PC-3 (cell line): ENCODE measurements at regions of chr16 and their contacts with region 1.

Region 1: DNA sequence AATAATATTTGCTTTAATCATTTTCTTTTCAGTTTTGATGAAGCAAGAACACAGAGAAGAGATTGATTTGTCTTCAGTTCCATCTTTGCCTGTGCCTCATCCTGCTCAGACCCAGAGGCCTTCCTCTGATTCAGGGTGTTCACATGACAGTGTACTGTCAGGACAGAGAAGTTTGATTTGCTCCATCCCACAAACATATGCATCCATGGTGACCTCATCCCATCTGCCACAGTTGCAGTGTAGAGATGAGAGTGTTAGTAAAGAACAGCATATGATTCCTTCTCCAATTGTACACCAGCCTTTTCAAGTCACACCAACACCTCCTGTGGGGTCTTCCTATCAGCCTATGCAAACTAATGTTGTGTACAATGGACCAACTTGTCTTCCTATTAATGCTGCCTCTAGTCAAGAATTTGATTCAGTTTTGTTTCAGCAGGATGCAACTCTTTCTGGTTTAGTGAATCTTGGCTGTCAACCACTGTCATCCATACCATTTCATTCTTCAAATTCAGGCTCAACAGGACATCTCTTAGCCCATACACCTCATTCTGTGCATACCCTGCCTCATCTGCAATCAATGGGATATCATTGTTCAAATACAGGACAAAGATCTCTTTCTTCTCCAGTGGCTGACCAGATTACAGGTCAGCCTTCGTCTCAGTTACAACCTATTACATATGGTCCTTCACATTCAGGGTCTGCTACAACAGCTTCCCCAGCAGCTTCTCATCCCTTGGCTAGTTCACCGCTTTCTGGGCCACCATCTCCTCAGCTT is 45.0 kb downstream of the ESRP2 start:
- DNase-seq: no peak
- ATAC-seq: no peak
- H3K4me3 ChIP-seq: no peak overlapping the region
- H3K27ac ChIP-seq: no peak overlapping the region
- H3K4me1 ChIP-seq: no peaks in the 10 kb centered on the region
- H3K27me3 ChIP-seq: no peaks in the 10 kb centered on the region
- CTCF ChIP-seq: no peak

Region 2: DNA sequence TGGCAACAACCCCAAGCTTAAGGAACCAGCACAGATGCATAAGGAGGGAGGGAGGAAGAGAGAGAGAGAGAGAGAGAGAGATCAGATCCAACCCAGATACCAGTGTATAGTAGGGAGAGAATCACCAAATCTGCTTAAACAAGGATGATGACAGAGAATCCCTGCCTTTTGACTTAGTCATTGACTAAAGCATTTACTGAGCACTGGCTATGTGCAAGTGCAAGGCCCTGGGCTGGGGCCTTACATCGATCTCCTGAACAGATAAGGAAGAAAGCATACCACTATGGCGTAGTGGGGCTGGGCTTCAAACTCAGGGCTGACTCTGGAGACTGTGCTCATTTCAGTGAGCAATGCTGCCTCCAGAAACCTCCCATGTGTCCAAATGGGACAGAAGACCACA is 368.4 kb before region 1 on chr16:
- CTCF ChIA-PET with region 1: no interaction called
- POLR2A ChIA-PET with region 1: no interaction called
- intact Hi-C with region 1: no loop called
- DNase-seq: no peak
- ATAC-seq: no peak
- H3K4me3 ChIP-seq: no peak overlapping the region
- H3K27ac ChIP-seq: no peak overlapping the region
- H3K4me1 ChIP-seq: no peaks in the 10 kb centered on the region
- H3K27me3 ChIP-seq: no peaks in the 10 kb centered on the region
- CTCF ChIP-seq: no peak

Region 3: DNA sequence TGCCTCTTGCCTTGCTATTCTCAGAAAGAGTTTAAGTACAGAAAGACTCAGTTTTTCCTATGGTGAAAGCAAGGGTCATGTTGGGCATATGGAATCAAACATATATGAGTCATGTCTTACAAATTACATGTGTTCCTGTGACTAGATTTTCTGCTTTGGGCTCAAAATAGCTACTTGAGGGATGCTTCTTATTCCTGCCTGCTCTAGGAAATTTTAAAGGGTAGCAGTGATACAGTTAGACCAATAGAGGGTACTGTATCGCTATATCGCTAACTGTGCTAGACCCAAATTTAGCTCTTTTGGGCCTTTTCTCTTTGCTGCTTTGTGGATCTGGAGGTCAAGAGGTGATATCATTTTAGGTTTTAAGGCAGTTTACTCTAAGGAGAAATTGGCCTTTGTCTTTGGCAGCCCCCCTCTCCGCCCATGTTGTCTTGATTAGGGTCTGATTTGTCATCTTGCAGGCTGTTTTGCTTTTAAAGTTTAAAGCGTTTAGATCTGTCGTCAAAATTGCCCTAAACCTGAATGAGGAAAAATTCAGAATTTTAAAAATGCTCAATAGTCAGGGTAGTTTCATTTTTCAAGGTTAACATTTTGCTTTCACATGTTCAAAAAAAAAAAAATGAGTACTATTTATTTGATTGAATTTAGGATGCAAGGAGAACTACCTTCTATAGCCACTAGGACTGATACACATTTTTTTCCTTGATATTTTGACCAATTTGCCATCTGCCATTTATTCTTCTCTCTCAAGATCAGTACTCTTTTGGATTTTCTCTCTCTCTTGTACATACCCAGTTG is 96.9 kb before region 1 on chr16:
- CTCF ChIA-PET with region 1: interaction called, 16 read pairs
- POLR2A ChIA-PET with region 1: no interaction called
- intact Hi-C with region 1: no loop called
- DNase-seq: peak; percentile 32
- ATAC-seq: peak; percentile 53; the same call in 1 of the 2 replicates
- H3K4me3 ChIP-seq: no peak overlapping the region
- H3K27ac ChIP-seq: no peak overlapping the region
- H3K4me1 ChIP-seq: no peaks in the 10 kb centered on the region
- H3K27me3 ChIP-seq: no peaks in the 10 kb centered on the region
- CTCF ChIP-seq: peak; percentile 48